ENCODE measurements at regions of chrX and their contacts with region 1.

Region 1: GRCh38 chrX:118566359-118566758 is 70.7 kb downstream of the DOCK11 start:
- DNase-seq: no peak
- H3K4me3 ChIP-seq: no peak overlapping the region
- H3K27ac ChIP-seq: no peak overlapping the region
- H3K4me1 ChIP-seq: no peaks in the 10 kb centered on the region
- H3K27me3 ChIP-seq: no peaks in the 10 kb centered on the region
- CTCF ChIP-seq: no peak
- POLR2A ChIP-seq: no peak

Region 2: GRCh38 chrX:118474586-118474985 is 91.8 kb before region 1 on chrX:
- intact Hi-C with region 1: no loop called
- DNase-seq: no peak
- H3K4me3 ChIP-seq: no peak overlapping the region
- H3K27ac ChIP-seq: no peak overlapping the region
- H3K4me1 ChIP-seq: no peaks in the 10 kb centered on the region
- H3K27me3 ChIP-seq: no peaks in the 10 kb centered on the region
- CTCF ChIP-seq: no peak
- POLR2A ChIP-seq: no peak

Region 3: DNA sequence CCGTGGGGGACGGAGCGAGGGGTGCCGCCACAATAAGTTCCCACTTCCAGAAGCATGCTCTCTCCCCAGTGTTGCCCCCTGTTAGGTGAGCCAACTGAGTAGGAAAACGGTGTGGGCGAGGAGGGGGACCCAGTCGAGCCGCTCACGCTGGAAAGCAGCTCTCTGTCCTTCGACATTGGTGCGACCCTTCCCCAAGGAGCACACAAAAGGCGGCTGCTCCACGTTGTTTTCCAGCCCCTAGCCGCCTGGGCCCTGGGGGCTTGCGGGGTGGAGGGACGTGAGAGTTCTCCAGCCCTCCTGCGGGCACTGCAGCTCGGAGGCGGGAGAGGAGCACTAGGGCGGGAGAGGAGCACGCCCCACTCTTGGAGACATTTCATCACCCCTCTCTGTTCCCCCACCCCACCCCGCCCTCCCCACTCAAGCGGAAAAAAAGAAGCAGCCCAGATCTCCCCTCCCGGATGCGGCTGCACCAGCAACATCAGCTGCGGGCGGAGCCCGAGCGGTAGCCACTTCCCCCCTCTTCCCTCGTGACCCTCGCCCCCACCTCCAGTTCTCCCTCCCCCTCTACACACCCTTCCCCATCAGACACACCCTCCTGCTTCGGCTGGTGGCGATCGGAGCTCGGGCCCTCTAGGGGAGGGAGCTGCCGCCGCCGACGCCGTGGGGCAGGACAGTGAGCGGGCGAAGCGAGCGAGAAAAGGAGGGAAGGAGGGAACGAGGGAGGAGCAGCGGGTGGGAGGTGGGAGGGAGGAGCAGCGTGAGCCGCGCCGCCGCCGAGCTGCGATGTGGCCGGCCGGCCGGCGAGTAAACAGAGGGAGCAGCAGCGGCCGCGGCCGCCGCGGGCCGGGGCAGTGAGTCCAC is 71.1 kb before region 1 on chrX and contains the start of gene DOCK11:
- intact Hi-C with region 1: loop called (anchors 10 kb)
- DNase-seq: peak in 1 of 2 donors; percentile 92
- H3K4me3 ChIP-seq: peak within 1 kb of the TSS; percentile 66 to 78
- H3K27ac ChIP-seq: peak within 1 kb of the TSS; percentile 89
- H3K4me1 ChIP-seq: no peaks in the 10 kb centered on the region
- H3K27me3 ChIP-seq: no peaks in the 10 kb centered on the region
- CTCF ChIP-seq: no peak
- POLR2A ChIP-seq: peak in 1 of 2 donors; percentile 49
- total RNA-seq, gene DOCK11: 20.6 TPM